ENCODE measurements at regions of chr13 and their contacts with region 1.

Region 1: DNA sequence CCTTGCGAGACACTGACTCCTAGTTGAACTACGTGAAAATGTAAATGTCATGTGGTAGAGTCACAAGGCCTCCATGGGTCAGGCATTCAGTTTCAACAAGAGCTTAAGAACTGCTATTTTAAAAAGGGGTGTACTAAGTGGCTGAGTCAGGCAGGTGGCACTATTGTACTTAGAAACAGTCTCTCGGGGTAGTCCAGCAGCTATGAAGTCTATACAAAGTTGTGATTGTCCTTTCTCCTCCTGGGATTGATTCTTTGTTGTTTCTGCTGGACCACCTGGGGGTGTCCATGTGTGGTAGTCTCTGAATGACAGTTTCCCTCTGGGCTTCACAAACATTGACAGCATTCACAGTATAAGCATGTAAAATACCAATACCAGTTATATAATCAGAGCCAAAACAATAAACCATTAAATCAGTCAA is 33.0 kb downstream of the UGGT2 start:
- DNase-seq: peak; percentile 77
- H3K4me3 ChIP-seq: no peak overlapping the region
- H3K27ac ChIP-seq: no peak overlapping the region
- H3K4me1 ChIP-seq: peaks cover 9% of the 10 kb centered on the region
- H3K27me3 ChIP-seq: no peaks in the 10 kb centered on the region
- CTCF ChIP-seq: peak; percentile 70 to 71
- POLR2A ChIP-seq: no peak

Region 2: DNA sequence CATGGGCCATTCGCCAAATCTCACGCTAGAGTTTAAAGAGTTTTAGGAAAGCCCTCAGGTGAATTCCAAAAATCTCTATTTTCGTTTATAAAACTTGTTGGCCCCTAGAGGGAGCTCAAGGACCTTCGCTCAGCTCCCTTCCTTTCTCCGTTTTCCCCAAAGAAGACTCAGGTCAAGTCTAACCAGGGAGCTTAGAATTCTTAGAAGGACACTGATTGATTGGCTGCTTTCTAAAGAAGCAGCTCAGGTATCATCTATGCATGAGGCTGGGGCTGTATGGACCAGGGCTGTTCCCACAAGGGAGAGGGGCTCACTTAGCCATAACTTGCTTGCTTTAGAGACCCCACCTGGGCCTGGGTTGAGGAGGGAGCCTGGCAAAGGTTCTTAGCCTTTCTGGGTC is 396.1 kb before region 1 on chr13:
- CTCF ChIA-PET with region 1: interaction called, 10 read pairs
- POLR2A ChIA-PET with region 1: no interaction called
- dilution Hi-C with region 1: no loop called
- intact Hi-C with region 1: no loop called
- DNase-seq: peak; percentile 50
- H3K4me3 ChIP-seq: no peak overlapping the region
- H3K27ac ChIP-seq: no peak overlapping the region
- H3K4me1 ChIP-seq: no peaks in the 10 kb centered on the region
- H3K27me3 ChIP-seq: no peaks in the 10 kb centered on the region
- CTCF ChIP-seq: peak; percentile 52 to 59
- POLR2A ChIP-seq: no peak

Region 3: DNA sequence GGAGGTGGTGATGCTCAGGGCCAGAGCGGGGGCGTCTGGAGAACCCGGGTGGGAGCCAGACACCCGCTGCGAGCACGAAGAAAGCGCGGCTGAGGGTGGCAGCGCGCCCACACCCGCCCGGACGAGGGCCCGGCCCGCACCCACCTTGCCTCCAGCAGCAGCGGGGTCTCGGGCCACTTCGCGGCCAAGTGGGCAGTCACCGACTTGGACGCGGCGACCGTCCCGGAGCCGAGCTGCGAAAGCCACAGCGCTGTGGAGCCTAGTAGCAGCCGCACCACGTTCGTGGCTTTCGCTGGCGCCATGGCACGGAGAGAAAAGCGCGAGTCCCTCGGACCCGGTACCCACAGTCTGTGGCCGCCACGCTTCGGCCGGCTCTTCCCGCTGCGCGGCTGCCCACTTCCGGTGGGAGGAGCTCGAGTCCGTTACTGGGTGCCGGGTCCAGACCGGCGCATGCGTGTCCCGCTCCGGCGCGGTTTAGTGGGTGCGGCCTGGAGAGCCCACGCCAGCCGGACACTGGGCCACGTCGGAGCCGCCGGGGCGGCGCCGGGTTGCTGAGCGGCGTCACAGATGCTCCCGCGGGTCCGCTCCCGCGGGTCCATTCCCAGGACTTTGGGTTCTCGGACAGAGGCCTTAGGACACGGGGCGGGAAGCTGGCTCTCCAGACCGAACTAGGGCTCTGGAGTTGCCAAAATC is 33.0 kb after region 1 on chr13 and contains the start of gene UGGT2:
- CTCF ChIA-PET with region 1: interaction called, 23 read pairs
- POLR2A ChIA-PET with region 1: no interaction called
- dilution Hi-C with region 1: no loop called
- intact Hi-C with region 1: loop called (anchors 1 kb)
- DNase-seq: peak; percentile 94
- H3K4me3 ChIP-seq: peak within 1 kb of the TSS; percentile 92 to 96 (median 94)
- H3K27ac ChIP-seq: peak within 1 kb of the TSS; percentile 95
- H3K4me1 ChIP-seq: peaks cover 3% of the 10 kb centered on the region
- H3K27me3 ChIP-seq: peaks cover 0 to 6% of the 10 kb centered on the region in 2 experiments
- CTCF ChIP-seq: no peak
- POLR2A ChIP-seq: peak; percentile 80
- total RNA-seq, gene UGGT2: 25.1 and 25.7 TPM in 2 replicates

Region 4: GRCh38 chr13:96089749-96090239 is 69.6 kb after region 1 on chr13 and contains the start of gene HS6ST3:
- CTCF ChIA-PET with region 1: interaction called, 10 read pairs
- POLR2A ChIA-PET with region 1: no interaction called
- dilution Hi-C with region 1: no loop called
- intact Hi-C with region 1: loop called (anchors 5 kb)
- DNase-seq: peak; percentile 15
- H3K4me3 ChIP-seq: peak within 1 kb of the TSS; percentile 21 to 42 (median 38)
- H3K27ac ChIP-seq: no peak within 1 kb of the TSS
- H3K4me1 ChIP-seq: peaks cover 27% of the 10 kb centered on the region
- H3K27me3 ChIP-seq: peaks cover 38 to 39% of the 10 kb centered on the region in 2 experiments
- CTCF ChIP-seq: no peak
- POLR2A ChIP-seq: no peak
- total RNA-seq, gene HS6ST3: 0.15 and 0.35 TPM in 2 replicates

Region 5: DNA sequence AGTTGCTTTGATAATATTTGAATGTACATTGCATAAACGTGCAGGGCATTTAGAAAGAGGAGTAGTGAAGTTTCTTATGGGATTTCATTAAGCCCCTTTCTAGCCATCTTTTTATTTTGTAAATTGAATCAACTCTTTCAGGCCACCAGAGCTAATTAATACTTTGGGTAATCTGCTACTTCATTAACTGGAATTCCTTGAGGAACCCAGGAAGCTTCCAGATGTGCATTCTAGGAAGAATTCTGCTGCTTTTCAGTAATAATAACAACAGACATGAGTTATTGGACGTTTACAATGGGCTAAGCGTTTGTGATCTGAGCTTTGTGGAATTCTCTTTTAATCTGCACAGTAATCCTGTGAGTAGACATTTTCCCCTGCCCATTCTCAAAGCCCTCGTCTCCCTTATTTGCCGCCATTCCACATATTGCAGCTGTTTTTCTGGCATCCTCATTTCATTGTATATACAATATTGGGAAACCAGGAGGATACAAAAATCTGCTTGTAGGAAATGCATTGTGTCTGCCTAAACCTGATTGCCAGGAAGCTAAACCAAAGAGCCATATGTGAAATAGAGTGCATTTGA is 173.7 kb after region 1 on chr13:
- CTCF ChIA-PET with region 1: no interaction called
- POLR2A ChIA-PET with region 1: no interaction called
- dilution Hi-C with region 1: no loop called
- intact Hi-C with region 1: no loop called
- DNase-seq: no peak
- H3K4me3 ChIP-seq: no peak overlapping the region
- H3K27ac ChIP-seq: no peak overlapping the region
- H3K4me1 ChIP-seq: no peaks in the 10 kb centered on the region
- H3K27me3 ChIP-seq: no peaks in the 10 kb centered on the region
- CTCF ChIP-seq: no peak
- POLR2A ChIP-seq: no peak

Region 6: GRCh38 chr13:96229356-96229755 is 209.2 kb after region 1 on chr13:
- CTCF ChIA-PET with region 1: interaction called, 251 read pairs
- POLR2A ChIA-PET with region 1: no interaction called
- dilution Hi-C with region 1: no loop called
- intact Hi-C with region 1: loop called (anchors 1 kb)
- DNase-seq: peak; percentile 38
- H3K4me3 ChIP-seq: no peak overlapping the region
- H3K27ac ChIP-seq: no peak overlapping the region
- H3K4me1 ChIP-seq: no peaks in the 10 kb centered on the region
- H3K27me3 ChIP-seq: no peaks in the 10 kb centered on the region
- CTCF ChIP-seq: peak; percentile 46 to 66
- POLR2A ChIP-seq: no peak

Region 7: DNA sequence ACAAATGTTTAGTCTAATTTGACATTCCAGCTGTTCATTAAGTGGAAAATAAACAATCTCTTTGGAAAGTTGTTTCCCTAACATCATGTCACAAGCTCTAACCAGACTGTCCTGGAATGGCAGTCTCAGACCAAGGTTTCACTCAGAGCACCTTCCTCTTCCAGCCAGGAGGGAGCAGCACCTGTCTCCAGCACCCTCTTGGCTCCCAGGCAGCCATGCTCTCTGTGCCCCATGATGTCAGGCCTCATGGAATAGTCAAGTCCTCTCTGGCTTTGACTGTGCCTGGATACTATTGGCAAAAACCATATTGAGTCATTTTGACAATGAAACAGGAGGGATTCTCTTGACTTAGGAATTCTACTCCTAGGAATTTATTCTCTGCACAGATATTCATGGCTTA is 802.7 kb after region 1 on chr13:
- CTCF ChIA-PET with region 1: interaction called, 400 read pairs
- POLR2A ChIA-PET with region 1: no interaction called
- dilution Hi-C with region 1: no loop called
- intact Hi-C with region 1: no loop called
- DNase-seq: peak; percentile 9
- H3K4me3 ChIP-seq: no peak overlapping the region
- H3K27ac ChIP-seq: no peak overlapping the region
- H3K4me1 ChIP-seq: no peaks in the 10 kb centered on the region
- H3K27me3 ChIP-seq: no peaks in the 10 kb centered on the region
- CTCF ChIP-seq: peak; percentile 21 to 38
- POLR2A ChIP-seq: no peak